Activated naive CD4-positive, alpha-beta T cell treated with anti-CD3 and anti-CD28 coated beads for 36 hours (primary cell): ENCODE measurements at regions of chr3 and their contacts with region 1.

Region 1: DNA sequence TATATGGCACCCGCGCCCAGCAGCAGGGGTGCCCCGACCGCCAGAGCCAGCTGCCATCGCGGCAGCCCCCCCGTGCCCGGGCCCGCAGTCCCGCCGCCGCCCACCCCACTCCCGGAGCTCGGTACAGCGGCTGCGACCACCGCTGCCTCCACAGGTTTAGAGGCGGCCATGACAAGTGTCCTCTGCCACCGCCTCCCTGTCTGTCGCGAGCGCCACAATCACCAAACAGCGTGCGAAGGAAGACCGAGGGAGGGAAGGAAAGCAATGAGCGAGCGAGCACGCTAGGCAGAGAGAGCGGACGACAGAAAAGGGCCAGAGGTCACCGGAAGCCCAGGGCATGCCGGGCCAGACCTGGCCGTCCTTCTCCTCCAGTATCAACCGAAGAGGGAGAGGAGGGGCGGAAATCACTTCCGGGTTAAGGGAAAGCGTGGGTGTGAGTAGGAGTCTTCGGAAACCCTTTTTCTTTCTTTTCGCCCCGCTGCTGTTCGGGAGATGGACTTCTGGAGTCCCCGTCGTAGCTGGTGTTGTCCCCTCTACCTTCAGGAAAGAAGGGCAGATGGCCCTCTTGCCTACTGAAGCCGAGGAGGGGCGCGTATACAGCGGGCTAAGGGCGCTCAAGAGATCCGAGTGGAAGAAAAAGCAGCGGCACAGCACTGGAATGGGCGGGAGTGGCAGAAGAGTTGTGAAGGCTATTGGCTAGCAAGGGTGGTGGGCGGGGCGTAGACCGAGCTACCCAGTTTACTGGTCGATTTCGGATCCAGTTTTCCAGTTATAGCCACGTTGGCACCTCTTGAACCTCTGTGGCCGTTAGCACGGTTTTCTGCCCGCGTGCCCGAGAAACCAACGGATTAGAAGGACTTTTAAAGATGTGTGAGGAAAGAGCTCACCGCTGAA is at the starts of genes LNP1 and TOMM70:
- DNase-seq: peak; percentile 98
- H3K4me3 Mint-ChIP-seq: peak within 1 kb of the TSS; percentile 95
- H3K27ac Mint-ChIP-seq: peak within 1 kb of the TSS; percentile 98
- H3K4me1 Mint-ChIP-seq: peaks cover 59% of the 10 kb centered on the region
- H3K27me3 Mint-ChIP-seq: no peaks in the 10 kb centered on the region
- total RNA-seq, gene LNP1: 2.2 to 2.4 TPM
- total RNA-seq, gene TOMM70: 48.5 to 48.6 TPM

Region 2: DNA sequence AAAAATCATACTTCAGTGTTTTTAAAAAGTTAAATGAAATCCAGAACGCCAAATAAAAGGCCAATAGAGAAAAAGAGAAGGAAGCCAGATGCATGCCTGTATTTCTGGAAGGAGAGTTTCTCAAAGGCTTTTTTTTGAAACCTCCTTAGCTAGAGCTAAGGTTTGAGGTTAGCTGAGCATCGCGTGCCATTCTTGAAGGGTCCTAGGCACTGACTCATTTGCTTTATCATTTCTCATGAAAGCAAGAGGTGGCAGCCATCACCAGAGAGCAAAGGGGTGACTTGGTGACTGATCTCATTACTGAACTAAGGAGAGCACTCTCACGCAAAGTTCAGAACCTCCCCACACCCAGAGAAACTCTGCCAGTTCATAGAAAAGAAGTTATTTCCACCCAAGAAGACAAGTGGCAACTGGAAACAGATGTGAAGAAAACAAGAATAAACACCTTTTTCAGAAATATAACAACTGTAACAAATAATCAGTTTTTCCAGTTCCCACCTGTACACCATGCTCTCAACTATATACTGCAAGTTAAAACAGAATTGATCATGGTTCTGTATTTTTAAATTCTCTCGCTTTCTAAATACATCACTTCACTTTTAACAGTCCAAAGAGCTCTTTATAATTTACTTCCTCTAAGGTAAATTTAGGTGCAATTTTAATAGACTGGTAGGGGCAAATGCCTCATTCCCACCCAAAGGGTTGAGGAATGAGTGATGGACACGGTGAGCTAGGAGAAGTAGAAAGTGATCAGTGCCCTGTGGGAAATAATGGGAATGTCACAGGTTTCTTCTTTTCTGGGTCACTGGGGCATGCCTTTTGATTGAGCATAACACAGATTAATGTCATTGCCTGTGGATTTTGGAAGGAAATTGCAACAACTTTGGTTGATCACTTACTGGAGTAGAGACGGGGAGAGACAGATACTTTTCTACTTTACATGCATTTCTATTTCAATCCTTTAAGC is 1844.6 kb before region 1 on chr3:
- CTCF ChIA-PET with region 1: no interaction called
- intact Hi-C with region 1: loop called (anchors 5 kb)
- DNase-seq: peak; percentile 87
- H3K4me3 Mint-ChIP-seq: peak overlapping the region; percentile 30
- H3K27ac Mint-ChIP-seq: peak overlapping the region; percentile 83
- H3K4me1 Mint-ChIP-seq: peaks cover 76% of the 10 kb centered on the region
- H3K27me3 Mint-ChIP-seq: peaks cover 5% of the 10 kb centered on the region

Region 3: DNA sequence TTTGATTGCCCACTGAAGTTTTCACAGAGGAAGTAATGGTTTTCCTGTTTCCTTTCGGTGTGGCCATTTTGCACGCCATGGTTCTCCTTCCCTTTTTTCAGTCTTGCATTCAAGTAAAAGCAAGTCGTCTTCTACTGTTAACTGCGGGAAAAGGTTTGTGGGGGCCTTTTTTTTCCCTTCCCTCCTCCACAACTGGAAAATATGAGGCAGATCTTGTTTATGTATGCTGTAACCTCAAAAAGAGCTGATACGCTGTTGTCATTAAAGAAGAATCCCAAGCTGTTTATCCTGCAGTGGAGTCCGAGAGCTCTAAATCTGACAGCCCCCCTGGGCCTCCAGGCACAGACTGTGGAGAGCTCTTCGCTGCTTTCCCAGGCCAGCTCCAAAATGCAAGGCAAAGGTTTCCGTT is 327.1 kb before region 1 on chr3:
- CTCF ChIA-PET with region 1: no interaction called
- intact Hi-C with region 1: loop called (anchors 2 kb)
- DNase-seq: peak; percentile 17
- H3K4me3 Mint-ChIP-seq: peak overlapping the region; percentile 34
- H3K27ac Mint-ChIP-seq: peak overlapping the region; percentile 47
- H3K4me1 Mint-ChIP-seq: peaks cover 46% of the 10 kb centered on the region
- H3K27me3 Mint-ChIP-seq: no peaks in the 10 kb centered on the region

Region 4: GRCh38 chr3:100316641-100317069 is 84.4 kb before region 1 on chr3:
- CTCF ChIA-PET with region 1: interaction called, 3 read pairs
- intact Hi-C with region 1: loop called (anchors 1 kb)
- DNase-seq: peak; percentile 55
- H3K4me3 Mint-ChIP-seq: peak overlapping the region; percentile 18
- H3K27ac Mint-ChIP-seq: no peak overlapping the region
- H3K4me1 Mint-ChIP-seq: peaks cover 13% of the 10 kb centered on the region
- H3K27me3 Mint-ChIP-seq: no peaks in the 10 kb centered on the region

Region 5: DNA sequence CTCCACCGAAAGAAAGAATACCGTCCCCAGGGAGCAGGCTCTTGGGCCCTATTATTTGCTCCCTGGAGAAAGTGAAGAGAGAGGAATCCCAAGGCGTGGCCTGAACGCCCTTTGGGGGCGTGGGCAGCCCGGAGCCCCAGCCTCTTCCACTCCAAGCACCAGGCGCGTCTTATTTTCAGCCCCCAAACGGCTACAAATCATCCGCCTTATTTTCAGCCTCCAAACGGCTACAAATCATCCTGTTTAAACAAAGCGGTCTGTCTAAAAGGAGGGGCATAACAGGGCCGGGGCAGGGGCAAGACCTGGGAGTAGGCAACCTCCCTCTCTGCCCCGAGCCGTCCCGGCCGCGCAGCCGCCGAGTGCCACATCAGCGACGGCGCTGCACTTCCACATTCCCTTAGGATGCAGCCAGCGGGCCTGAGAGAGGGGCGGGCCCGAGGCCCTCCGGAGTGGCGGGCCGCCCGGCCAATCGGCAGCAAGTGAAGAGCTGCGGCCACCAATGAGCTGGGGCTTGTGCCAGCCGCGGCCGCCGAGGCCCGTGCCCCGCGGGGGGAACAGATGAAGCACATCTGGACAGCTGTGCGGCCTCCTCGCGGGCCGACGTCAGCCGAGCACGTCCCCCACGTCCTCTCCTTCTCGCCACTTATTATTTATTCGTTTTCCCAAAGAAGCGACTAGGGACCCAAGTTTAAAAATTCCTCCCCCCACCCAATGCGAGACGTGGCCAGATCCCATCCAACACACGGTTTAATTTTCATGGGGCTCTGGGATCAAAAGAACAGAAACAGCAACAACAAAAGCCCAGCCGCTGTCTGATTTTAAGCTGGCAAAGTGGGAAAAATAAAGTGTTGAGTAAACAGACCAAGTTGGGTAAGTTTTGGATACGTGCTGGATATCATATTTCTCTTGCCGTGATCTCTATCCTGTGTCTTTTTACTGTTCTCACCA is 91.3 kb after region 1 on chr3 and contains the start of gene TMEM45A:
- CTCF ChIA-PET with region 1: no interaction called
- intact Hi-C with region 1: loop called (anchors 1 kb)
- DNase-seq: peak; percentile 86
- H3K4me3 Mint-ChIP-seq: peak within 1 kb of the TSS; percentile 77
- H3K27ac Mint-ChIP-seq: no peak within 1 kb of the TSS
- H3K4me1 Mint-ChIP-seq: peaks cover 3% of the 10 kb centered on the region
- H3K27me3 Mint-ChIP-seq: peaks cover 6% of the 10 kb centered on the region
- total RNA-seq, gene TMEM45A: 0.21 to 0.22 TPM

Region 6: DNA sequence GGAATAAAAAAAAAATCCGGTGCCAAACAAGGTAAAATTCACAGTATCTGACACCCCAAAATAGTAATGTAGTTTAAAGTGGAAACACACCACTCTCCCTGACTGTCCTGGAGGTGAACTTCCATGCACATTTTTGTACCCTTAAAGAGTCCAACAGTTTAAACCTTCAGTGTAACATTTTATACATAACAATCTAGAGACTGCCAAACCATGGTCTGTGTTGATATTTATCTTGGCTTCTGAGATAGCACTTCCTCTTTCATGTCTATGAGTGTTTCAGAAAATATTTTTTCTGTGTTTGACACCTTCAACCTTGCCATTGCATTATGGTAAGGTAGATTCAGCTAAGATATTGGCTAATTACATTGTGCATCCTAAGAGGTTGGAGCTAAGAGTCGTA is 105.3 kb after region 1 on chr3:
- CTCF ChIA-PET with region 1: no interaction called
- intact Hi-C with region 1: no loop called
- DNase-seq: no peak
- H3K4me3 Mint-ChIP-seq: no peak overlapping the region
- H3K27ac Mint-ChIP-seq: no peak overlapping the region
- H3K4me1 Mint-ChIP-seq: no peaks in the 10 kb centered on the region
- H3K27me3 Mint-ChIP-seq: peaks cover 42% of the 10 kb centered on the region

Region 7: DNA sequence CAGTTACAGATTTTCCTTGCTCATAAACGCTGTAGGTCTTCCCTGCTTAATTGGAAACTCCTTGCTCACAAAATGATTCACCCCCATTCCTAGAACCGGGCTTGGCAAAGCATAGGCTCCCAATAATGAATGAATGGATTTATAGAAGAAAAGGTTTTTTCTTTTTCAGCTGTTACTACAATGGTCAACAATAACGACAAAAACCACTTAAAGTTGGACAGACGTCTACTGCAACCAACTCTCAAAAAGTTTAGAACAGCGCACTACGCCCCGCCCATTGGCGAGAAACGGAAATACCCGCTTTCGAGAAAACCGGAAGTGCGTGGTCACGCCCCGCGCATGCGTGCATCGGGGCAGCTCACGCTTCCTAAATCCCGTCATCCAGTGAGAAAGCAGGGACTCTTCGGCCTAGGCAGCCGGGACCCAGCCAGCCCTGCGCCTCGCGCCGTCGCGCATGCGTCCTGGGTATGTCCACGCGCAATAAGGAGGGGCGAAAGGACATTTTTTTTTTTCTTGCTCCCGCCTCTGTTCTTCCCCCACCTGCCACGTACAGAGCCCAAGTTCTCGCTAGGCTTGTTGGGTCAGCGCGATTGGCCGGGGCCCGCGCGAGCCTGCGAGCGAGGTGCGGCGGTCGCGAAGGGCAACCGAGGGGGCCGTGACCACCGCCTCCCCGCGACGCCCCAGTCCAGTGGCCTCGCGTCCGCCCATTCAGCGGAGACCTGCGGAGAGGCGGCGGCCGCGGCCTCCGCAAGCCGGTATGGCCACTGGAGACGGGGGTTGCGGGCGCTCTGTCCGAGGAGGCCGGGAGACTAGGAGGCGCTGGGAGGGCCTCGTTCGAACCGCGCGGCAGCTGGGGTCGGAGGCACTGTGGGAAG is 308.2 kb after region 1 on chr3 and contains the start of gene TFG:
- CTCF ChIA-PET with region 1: no interaction called
- intact Hi-C with region 1: loop called (anchors 1 kb)
- DNase-seq: peak; percentile 98
- H3K4me3 Mint-ChIP-seq: peak within 1 kb of the TSS; percentile 83
- H3K27ac Mint-ChIP-seq: peak within 1 kb of the TSS; percentile 97
- H3K4me1 Mint-ChIP-seq: peaks cover 39% of the 10 kb centered on the region
- H3K27me3 Mint-ChIP-seq: peaks cover 6% of the 10 kb centered on the region
- total RNA-seq, gene TFG: 45.6 to 46.0 TPM

Region 8: GRCh38 chr3:101512646-101513418 is 1111.8 kb after region 1 on chr3 and contains the start of gene SENP7:
- CTCF ChIA-PET with region 1: no interaction called
- intact Hi-C with region 1: loop called (anchors 2 kb)
- DNase-seq: peak; percentile 89
- H3K4me3 Mint-ChIP-seq: peak within 1 kb of the TSS; percentile 97
- H3K27ac Mint-ChIP-seq: peak within 1 kb of the TSS; percentile 97
- H3K4me1 Mint-ChIP-seq: peaks cover 50% of the 10 kb centered on the region
- H3K27me3 Mint-ChIP-seq: no peaks in the 10 kb centered on the region
- total RNA-seq, gene SENP7: 16.1 to 16.8 TPM